Head of caudate nucleus (tissue), 42 donors: ENCODE measurements at regions of chr19 and their contacts with region 1.

Region 1: GRCh38 chr19:7799640-7800355 is 30.2 kb upstream of the EVI5L start:
- DNase-seq: peak; percentile 43 to 90 (median 74)

Region 2: GRCh38 chr19:7562646-7563393 is 237.0 kb before region 1 on chr19:
- intact Hi-C with region 1: loop called (anchors 10 kb)
- DNase-seq: no peak